Activated naive CD4-positive, alpha-beta T cell treated with anti-CD3 and anti-CD28 coated beads for 36 hours (primary cell): ENCODE measurements at regions of chr10 and their contacts with region 1.

Region 1: GRCh38 chr10:72260588-72261322 is 13.0 kb upstream of the DDIT4 start:
- DNase-seq: peak; percentile 94
- H3K4me3 Mint-ChIP-seq: peak overlapping the region; percentile 81
- H3K27ac Mint-ChIP-seq: peak overlapping the region; percentile 99
- H3K4me1 Mint-ChIP-seq: peaks cover 65% of the 10 kb centered on the region
- H3K27me3 Mint-ChIP-seq: no peaks in the 10 kb centered on the region

Region 2: GRCh38 chr10:72215652-72216549 is 44.9 kb before region 1 on chr10 and contains the starts of genes ANAPC16 and ASCC1:
- CTCF ChIA-PET with region 1: no interaction called
- intact Hi-C with region 1: loop called (anchors 1 kb)
- DNase-seq: peak; percentile 93
- H3K4me3 Mint-ChIP-seq: peak within 1 kb of the TSS; percentile 91
- H3K27ac Mint-ChIP-seq: peak within 1 kb of the TSS; percentile 98
- H3K4me1 Mint-ChIP-seq: peaks cover 67% of the 10 kb centered on the region
- H3K27me3 Mint-ChIP-seq: no peaks in the 10 kb centered on the region
- total RNA-seq, gene ANAPC16: 127 to 128 TPM
- total RNA-seq, gene ASCC1: 61.6 to 68.5 TPM

Region 3: GRCh38 chr10:72273410-72274212 is 12.9 kb after region 1 on chr10 and contains the start of gene DDIT4:
- CTCF ChIA-PET with region 1: interaction called, 10 read pairs
- intact Hi-C with region 1: loop called (anchors 1 kb)
- DNase-seq: peak; percentile 99
- H3K4me3 Mint-ChIP-seq: peak within 1 kb of the TSS; percentile 96
- H3K27ac Mint-ChIP-seq: peak within 1 kb of the TSS; percentile 98
- H3K4me1 Mint-ChIP-seq: peaks cover 34% of the 10 kb centered on the region
- H3K27me3 Mint-ChIP-seq: no peaks in the 10 kb centered on the region
- total RNA-seq, gene DDIT4: 684 to 689 TPM

Region 4: DNA sequence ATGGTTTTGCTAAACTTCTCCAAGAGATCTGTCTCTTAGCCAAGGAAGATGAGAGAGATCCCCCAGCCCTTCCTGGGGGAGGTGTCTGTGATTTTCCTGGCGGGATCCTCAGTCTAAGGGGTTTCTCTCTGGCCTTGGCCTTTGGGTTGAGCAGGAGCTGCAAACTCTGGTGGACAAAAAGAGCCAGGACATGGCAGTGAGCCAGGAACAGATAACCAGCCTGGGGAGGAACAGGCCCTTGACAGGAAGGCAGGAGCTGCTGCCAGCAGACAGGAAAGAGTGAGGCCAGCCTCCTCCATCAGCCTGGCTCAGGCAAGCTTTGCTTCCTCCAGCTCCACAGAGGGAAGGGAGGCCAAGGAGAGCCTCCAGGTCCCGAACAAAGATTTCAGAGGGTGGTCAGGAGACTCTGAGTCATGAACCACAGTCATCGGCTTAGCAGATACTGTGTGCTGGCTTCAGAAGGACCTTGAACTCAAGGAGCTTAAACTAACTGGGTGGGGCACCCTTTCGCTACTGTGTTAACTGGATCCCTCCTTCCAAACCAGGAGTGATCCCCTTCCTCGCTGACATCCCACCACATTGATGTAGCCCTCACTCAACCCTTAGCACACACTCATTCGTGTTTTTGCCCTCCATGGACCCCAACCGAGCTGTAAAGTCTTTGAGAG is 47.7 kb after region 1 on chr10:
- CTCF ChIA-PET with region 1: interaction called, 4 read pairs
- intact Hi-C with region 1: loop called (anchors 1 kb)
- DNase-seq: peak; percentile 73
- H3K4me3 Mint-ChIP-seq: no peak overlapping the region
- H3K27ac Mint-ChIP-seq: peak overlapping the region; percentile 87
- H3K4me1 Mint-ChIP-seq: peaks cover 74% of the 10 kb centered on the region
- H3K27me3 Mint-ChIP-seq: no peaks in the 10 kb centered on the region